ENCODE measurements at regions of chr4 and their contacts with region 1.

Region 1: GRCh38 chr4:108620101-108620932 is at the start of gene RPL34:
- DNase-seq: peak; percentile 95
- H3K4me3 Mint-ChIP-seq: peak within 1 kb of the TSS; percentile 99
- H3K27ac Mint-ChIP-seq: peak within 1 kb of the TSS; percentile 95
- H3K4me1 Mint-ChIP-seq: peaks cover 38% of the 10 kb centered on the region
- H3K27me3 Mint-ChIP-seq: no peaks in the 10 kb centered on the region
- total RNA-seq, gene RPL34: 1,375 and 1,412 TPM in 2 replicates

Region 2: GRCh38 chr4:107719922-107720722 is 900.2 kb before region 1 on chr4 and contains the start of gene PAPSS1:
- intact Hi-C with region 1: loop called (anchors 1 kb)
- DNase-seq: peak; percentile 92
- H3K4me3 Mint-ChIP-seq: peak within 1 kb of the TSS; percentile 91
- H3K27ac Mint-ChIP-seq: peak within 1 kb of the TSS; percentile 87
- H3K4me1 Mint-ChIP-seq: peaks cover 27% of the 10 kb centered on the region
- H3K27me3 Mint-ChIP-seq: no peaks in the 10 kb centered on the region
- total RNA-seq, gene PAPSS1: 36.9 TPM in 2 replicates

Region 3: DNA sequence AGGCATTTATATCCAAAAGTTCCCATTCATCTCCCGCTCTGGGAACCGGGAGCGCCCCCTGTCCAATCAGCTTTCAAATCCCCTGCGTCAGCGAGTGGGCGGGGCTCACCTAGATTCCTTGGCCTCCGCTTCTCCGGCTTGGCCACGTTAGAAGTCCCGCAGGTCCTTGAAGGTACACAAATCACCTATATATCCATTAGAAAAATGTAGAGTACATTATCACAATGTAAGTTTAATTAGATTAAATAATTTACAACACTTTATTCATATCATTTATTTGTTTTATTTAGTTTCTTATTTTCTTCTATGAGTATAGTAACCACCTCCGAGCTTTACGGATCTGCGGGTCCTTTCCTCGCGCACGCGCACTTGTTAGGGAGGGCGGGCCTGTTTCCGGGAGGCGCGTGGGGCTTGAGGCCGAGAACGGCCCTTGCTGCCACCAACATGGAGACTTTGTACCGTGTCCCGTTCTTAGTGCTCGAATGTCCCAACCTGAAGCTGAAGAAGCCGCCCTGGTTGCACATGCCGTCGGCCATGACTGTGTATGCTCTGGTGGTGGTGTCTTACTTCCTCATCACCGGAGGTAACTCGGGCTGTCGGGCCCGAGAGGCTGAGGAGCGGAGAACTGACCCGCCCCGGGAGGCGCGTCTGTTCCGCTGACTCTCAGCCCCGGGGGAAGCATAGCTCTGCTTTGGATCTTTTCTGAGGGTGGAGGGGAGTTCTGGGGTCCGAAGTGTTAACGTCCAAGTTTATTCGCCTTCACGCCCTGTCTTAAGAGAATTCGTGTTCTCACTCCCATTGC is 30.1 kb after region 1 on chr4 and contains the start of gene OSTC:
- intact Hi-C with region 1: loop called (anchors 1 kb)
- DNase-seq: peak; percentile 90
- H3K4me3 Mint-ChIP-seq: peak within 1 kb of the TSS; percentile 97
- H3K27ac Mint-ChIP-seq: peak within 1 kb of the TSS; percentile 92
- H3K4me1 Mint-ChIP-seq: peaks cover 21% of the 10 kb centered on the region
- H3K27me3 Mint-ChIP-seq: no peaks in the 10 kb centered on the region
- total RNA-seq, gene OSTC: 113 and 115 TPM in 2 replicates

Region 4: DNA sequence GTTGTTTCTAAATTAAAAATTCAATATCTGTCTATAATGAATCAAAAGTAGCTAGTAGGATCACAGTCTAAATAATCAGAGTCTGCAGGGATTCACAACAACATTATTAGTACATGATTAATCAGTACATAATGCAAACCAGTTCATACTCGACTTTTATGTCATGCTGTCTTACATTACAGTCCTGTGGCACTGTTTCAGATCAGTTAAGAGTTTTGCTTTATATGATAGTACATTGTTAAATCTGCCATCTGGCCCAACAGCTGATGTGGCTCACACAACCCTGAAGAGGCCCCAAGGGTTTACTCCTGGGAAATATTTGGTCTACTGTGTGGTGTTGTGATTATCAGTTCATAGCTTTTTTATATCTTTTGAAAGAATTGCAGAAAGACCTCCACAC is 389.6 kb after region 1 on chr4:
- intact Hi-C with region 1: no loop called
- DNase-seq: no peak
- H3K4me3 Mint-ChIP-seq: no peak overlapping the region
- H3K27ac Mint-ChIP-seq: no peak overlapping the region
- H3K4me1 Mint-ChIP-seq: peaks cover 13% of the 10 kb centered on the region
- H3K27me3 Mint-ChIP-seq: no peaks in the 10 kb centered on the region